AG04449 (cell line): ENCODE measurements at regions of chr10 and their contacts with region 1.

Region 1: GRCh38 chr10:102167861-102168260 is 15.7 kb downstream of the NOLC1 start:
- DNase-seq: no peak
- H3K4me3 ChIP-seq: no peak overlapping the region
- CTCF ChIP-seq: no peak

Region 2: GRCh38 chr10:102185811-102186527 is 18.1 kb after region 1 on chr10:
- CTCF ChIA-PET with region 1: interaction called, 17 read pairs
- POLR2A ChIA-PET with region 1: no interaction called
- DNase-seq: no peak
- H3K4me3 ChIP-seq: no peak overlapping the region
- CTCF ChIP-seq: no peak

Region 3: GRCh38 chr10:102220612-102221011 is 52.8 kb after region 1 on chr10:
- CTCF ChIA-PET with region 1: interaction called, 87 read pairs
- POLR2A ChIA-PET with region 1: no interaction called
- DNase-seq: no peak
- H3K4me3 ChIP-seq: no peak overlapping the region
- CTCF ChIP-seq: no peak

Region 4: DNA sequence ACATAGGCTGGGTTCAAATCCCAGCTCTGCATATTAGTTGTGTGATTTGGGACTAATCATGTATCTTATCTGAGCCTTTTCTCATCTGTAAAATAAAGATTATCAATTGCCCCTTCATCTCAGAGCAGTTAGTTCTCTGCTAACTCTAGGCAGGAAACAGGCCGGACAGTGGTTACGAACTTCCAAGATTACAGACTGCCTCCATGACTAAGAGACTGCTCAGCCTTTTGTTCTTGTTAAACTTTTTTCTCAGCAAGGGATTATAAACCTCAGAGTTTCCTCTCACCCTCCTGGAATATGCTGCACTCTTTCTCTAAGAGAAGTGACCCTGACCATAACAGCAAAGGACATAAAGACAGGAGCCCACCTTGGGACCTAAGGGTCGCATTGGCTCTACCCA is 175.1 kb after region 1 on chr10:
- CTCF ChIA-PET with region 1: interaction called, 21 read pairs
- POLR2A ChIA-PET with region 1: no interaction called
- DNase-seq: peak; percentile 52
- H3K4me3 ChIP-seq: no peak overlapping the region
- CTCF ChIP-seq: no peak

Region 5: DNA sequence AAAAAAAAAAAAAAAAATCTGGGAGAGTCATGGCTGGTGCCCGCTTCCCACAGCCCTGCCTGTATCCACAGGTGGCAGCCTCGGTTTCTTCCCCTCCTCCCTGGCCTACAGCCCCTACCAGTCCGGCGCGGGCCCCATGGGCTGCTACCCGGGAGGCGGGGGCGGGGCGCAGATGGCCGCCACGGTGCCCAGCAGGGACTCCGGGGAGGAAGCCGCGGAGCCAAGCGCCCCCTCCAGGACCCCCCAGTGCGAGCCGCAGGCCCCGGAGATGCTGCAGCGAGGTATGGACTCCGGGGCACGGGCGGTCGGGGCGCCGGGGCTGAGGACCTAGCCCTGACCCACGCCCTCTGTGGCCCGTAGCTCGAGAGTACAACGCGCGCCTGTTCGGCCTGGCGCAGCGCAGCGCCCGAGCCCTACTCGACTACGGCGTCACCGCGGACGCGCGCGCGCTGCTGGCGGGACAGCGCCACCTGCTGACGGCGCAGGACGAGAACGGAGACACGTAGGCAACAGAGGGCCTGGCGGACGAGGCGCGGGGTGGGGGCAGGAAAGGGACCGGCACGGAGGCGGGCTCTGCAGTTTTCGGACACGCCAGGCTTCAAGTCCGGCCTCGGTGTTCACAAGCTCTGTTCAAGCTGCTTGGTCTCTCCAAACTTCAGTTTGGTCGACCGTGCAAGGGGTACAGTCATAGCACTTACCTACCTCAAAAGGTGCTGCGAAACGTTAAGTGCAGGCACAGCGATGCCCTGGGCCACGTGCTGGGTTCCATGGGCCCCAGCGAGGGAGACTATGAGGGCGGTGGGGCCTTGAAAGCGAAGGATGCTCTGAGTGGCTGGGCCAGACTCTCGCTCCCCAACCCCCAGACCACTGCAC is 231.6 kb after region 1 on chr10:
- CTCF ChIA-PET with region 1: interaction called, 92 read pairs
- POLR2A ChIA-PET with region 1: interaction called, 5 read pairs
- DNase-seq: no peak
- H3K4me3 ChIP-seq: peak overlapping the region; percentile 59
- CTCF ChIP-seq: peak; percentile 97